Psoas muscle (tissue), 8 donors: ENCODE measurements at regions of chr5 and their contacts with region 1.

Region 1: DNA sequence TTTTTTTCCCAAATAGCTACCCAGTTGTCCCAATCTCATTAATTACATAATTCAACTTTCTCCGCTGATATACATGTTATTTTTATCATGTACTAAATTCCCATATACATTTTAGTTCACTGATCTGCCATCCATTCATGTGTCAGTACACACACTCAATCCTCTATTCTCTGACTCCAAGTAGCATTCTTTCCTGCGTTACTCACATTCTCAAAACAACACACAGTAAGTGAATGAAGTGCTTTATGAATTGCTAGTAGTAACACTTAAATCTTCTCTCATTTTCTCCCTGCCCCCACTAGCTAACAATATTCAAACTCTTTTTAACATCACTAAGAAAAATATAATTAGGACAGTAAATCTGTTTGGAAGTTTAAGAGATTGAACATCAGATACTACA is 8.9 kb downstream of the ZNF366 start:
- DNase-seq: no peak
- ATAC-seq: peak in 2 of 4 donors; percentile 50 to 74
- H3K4me3 ChIP-seq: no peak overlapping the region
- H3K27ac ChIP-seq: no peak overlapping the region
- H3K4me1 ChIP-seq: peaks cover 11% of the 10 kb centered on the region
- H3K27me3 ChIP-seq: no peaks in the 10 kb centered on the region
- CTCF ChIP-seq: no peak

Region 2: GRCh38 chr5:72467421-72468386 is 30.6 kb before region 1 on chr5:
- intact Hi-C with region 1: no loop called
- DNase-seq: no peak
- ATAC-seq: no peak
- H3K4me3 ChIP-seq: no peak overlapping the region
- H3K27ac ChIP-seq: peak overlapping the region; percentile 53
- H3K4me1 ChIP-seq: peaks cover 51% of the 10 kb centered on the region
- H3K27me3 ChIP-seq: no peaks in the 10 kb centered on the region
- CTCF ChIP-seq: no peak

Region 3: GRCh38 chr5:72482046-72482445 is 16.2 kb before region 1 on chr5:
- intact Hi-C with region 1: loop called in 1 of 2 experiments (anchors 2 kb)
- DNase-seq: no peak
- ATAC-seq: no peak
- H3K4me3 ChIP-seq: no peak overlapping the region
- H3K27ac ChIP-seq: no peak overlapping the region
- H3K4me1 ChIP-seq: peaks cover 31% of the 10 kb centered on the region
- H3K27me3 ChIP-seq: no peaks in the 10 kb centered on the region
- CTCF ChIP-seq: no peak